BJ (cell line): ENCODE measurements at regions of chr6 and their contacts with region 1.

Region 1: DNA sequence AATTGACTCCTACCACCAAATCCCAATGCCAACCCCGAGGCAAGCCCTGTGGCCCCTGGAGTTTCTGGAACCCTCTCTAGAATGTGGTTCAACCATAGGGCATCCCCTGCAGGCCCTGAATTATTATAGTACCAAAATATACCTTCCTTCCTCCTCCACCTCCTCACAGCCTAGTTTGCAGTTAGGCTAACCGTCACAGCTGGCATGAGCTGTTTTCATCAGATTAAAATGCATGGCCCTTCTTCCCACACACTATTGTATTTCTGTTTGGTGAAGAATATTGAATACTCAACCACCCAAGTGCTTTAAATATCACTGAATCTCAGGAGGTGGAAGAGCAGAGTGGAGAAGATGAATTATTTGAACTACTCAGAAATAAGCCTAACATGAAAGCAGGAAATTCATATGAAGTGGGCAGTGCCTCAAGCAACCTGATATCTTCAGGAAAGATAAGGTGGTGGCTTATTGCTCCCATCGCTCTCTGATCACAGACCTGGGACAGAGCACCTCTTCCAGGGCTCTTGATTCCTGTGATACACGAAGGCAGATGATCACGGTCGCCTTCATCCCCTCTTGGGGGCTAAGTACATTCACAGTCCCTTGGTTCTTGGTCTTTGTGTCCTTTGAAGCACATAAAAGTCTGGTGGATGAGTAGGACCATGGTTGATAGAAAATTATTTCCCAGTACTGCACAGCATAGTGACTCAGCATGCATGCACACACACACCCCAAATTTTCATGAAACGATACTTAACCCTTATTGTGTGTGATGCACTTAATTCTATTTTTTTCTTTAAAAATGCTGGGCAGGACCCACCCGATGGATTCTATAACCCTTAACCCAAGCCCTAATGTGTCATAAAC is 90.9 kb downstream of the PSMG4 start:
- DNase-seq: no peak
- H3K4me3 ChIP-seq: no peak overlapping the region
- H3K27me3 ChIP-seq: peaks cover 12% of the 10 kb centered on the region; the same call in 1 of the 2 replicates
- CTCF ChIP-seq: no peak

Region 2: DNA sequence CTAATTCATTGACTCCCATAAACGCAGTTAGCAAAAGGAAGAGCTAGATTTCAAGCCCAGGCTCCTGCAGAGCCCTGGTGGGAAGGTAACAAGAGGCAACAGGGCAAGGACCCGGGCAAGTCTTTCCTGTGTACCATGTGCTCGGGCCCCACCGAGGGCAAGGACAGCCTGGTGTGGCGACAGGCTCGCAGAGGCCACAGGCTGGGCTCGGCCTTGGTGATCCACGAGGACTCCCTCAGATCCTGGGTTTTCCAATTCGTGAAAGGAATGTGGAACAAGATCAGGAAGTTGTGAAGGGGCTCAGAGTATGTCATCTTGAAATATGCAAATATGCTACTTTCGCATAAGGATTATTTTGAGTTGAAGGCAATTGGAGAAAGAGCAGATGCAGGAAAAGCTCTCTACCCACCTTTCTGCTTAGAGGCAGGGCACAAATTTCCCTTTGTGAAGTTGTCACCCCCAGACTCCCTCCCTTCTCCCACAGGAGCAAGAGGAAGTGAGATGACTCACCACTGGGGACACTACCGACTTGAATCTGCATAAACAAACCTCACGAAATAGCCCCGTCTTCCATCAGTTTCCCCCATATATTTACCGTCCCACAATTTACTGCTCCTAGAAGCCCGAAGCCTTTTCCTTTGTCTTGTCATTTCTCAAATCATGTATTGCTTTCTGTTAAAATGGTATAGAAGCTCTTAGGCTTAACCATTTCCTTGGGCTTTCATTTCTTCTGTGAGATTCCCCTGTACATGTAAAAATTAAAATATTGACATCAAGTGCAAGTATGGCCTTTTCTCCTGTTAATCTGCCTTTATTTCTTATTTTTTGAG is 11.9 kb before region 1 on chr6:
- CTCF ChIA-PET with region 1: interaction called, 11 read pairs
- POLR2A ChIA-PET with region 1: no interaction called
- DNase-seq: no peak
- H3K4me3 ChIP-seq: no peak overlapping the region
- H3K27me3 ChIP-seq: peaks cover 9% of the 10 kb centered on the region
- CTCF ChIP-seq: no peak